ENCODE measurements at regions of chr3 and their contacts with region 1.

Region 1: GRCh38 chr3:94069194-94069813 is 6.4 kb downstream of the NSUN3 start:
- DNase-seq: peak; percentile 27
- H3K4me3 Mint-ChIP-seq: no peak overlapping the region
- H3K27ac Mint-ChIP-seq: no peak overlapping the region
- H3K4me1 Mint-ChIP-seq: peaks cover 15% of the 10 kb centered on the region
- H3K27me3 Mint-ChIP-seq: no peaks in the 10 kb centered on the region
- CTCF ChIP-seq: peak; percentile 47

Region 2: DNA sequence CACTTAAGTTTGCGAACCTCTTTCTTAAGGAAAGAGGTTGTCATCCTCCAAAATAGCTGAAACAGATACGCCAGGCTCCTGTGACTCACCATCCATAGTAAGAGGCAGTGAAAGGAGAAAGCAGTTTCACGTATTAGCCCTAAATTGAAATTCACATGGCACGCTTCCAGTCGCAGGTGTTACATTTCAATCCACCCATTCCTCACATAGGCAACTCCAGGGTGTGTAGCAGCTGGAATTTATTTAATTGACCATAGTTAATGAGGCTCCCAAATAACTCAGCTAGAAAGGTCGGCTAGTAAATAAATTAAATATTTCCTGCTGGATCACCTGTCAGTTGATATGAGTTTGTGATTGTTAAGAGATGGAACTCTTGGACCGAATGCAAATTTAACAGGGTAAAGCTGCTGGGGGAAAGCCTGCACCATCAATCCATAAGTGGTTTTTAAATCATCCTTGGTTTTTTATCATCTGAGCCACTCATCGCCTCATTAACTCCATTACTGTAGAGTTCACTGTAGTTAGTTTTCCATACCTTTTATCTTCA is 13.2 kb after region 1 on chr3:
- CTCF ChIA-PET with region 1: interaction called, 37 read pairs
- POLR2A ChIA-PET with region 1: no interaction called
- intact Hi-C with region 1: no loop called
- DNase-seq: no peak
- H3K4me3 Mint-ChIP-seq: no peak overlapping the region
- H3K27ac Mint-ChIP-seq: no peak overlapping the region
- H3K4me1 Mint-ChIP-seq: peaks cover 6% of the 10 kb centered on the region
- H3K27me3 Mint-ChIP-seq: no peaks in the 10 kb centered on the region
- CTCF ChIP-seq: no peak